PC-9 (cell line): ENCODE measurements at regions of chr12 and their contacts with region 1.

Region 1: GRCh38 chr12:68610370-68611093 is at the start of gene RAP1B:
- DNase-seq: peak; percentile 66 to 89
- H3K4me3 ChIP-seq: peak within 1 kb of the TSS; percentile 97
- H3K27ac ChIP-seq: peak within 1 kb of the TSS; percentile 60
- H3K4me1 ChIP-seq: peaks cover 25% of the 10 kb centered on the region
- H3K27me3 ChIP-seq: no peaks in the 10 kb centered on the region
- CTCF ChIP-seq: no peak
- total RNA-seq, gene RAP1B: 59.0 and 89.7 TPM in 2 replicates

Region 2: DNA sequence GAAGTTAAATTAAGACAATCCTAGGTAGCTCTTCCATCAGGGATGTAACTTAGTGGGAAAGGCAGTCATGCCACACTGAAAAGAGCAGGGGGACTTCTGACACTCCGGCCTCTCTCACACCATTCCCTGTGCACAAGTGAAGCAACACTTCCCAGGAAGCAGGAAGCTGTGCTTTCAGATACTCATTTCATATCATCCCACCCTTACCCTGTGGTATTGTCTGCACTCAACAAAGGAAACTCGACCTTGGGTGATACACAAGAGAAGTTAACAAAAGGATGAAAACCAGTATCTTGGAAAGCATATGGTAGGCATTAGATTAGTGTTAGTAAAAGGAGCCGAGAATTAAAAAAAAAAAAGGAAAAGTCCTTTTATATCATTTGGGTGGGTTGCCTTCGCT is 217.1 kb before region 1 on chr12:
- CTCF ChIA-PET with region 1: no interaction called
- POLR2A ChIA-PET with region 1: interaction called, 24 read pairs
- intact Hi-C with region 1: no loop called
- DNase-seq: no peak
- H3K4me3 ChIP-seq: no peak overlapping the region
- H3K27ac ChIP-seq: no peak overlapping the region
- H3K4me1 ChIP-seq: no peaks in the 10 kb centered on the region
- H3K27me3 ChIP-seq: no peaks in the 10 kb centered on the region
- CTCF ChIP-seq: no peak

Region 3: DNA sequence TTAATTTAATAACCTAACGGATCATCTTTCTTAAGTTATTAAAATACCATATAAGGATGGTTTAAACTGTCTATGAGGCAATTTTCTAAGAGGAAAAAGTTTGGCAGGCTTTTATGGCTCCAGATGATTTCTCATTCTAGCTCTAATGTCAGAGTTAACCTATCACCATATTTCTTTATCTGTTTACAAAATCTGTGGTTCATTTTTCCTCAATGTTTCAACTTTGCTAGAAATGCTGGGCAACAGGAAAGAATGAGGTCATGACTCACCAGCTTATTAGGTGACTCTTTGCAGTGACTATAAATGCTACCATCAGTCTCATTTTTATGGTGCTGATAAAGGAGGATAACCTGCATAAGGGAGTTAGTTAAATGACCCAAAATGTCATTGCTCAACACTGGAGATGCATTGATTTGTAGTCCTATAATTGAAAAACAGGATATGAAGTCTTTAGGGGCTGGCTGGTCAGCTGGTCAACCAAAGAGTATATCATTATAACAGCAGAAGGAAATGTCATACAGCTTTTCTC is 45.1 kb before region 1 on chr12:
- CTCF ChIA-PET with region 1: no interaction called
- POLR2A ChIA-PET with region 1: interaction called, 8 read pairs
- intact Hi-C with region 1: loop called (anchors 1 kb)
- DNase-seq: peak; percentile 32 to 96
- H3K4me3 ChIP-seq: no peak overlapping the region
- H3K27ac ChIP-seq: no peak overlapping the region
- H3K4me1 ChIP-seq: peaks cover 24% of the 10 kb centered on the region
- H3K27me3 ChIP-seq: no peaks in the 10 kb centered on the region
- CTCF ChIP-seq: no peak

Region 4: DNA sequence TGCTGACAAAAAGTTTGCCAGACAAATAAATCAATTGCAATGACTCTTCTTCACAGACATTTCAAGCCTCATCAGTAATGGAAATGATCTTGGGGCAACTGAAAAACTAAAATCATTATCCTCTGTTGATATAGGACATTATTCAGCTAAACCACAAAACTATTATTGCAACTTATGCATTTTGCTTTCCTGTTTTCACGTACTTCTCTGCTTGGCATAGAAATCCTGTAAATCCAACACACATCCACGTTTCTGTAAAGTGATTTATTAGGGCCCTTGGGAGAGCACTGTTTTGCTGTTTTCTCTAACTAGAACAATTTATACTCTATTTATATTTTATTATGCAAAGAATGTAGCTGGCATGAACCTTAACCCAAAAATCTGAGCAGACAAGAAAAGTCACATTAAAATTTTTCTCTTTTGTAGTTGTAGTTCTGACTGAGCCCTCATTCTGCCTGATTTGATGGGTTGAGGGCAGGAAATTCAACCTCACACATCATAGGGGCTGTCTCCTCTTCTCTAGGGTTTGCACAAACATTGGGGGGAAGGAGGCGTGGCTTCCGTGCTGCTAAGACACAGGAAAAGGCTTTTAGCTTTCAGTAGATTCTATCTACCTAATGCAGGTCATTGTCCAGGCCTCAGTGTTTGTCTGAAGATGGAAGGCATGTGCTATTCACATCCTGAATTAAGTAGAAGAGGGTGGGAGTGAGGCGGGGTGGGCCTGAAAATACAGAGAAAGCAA is 64.7 kb after region 1 on chr12:
- CTCF ChIA-PET with region 1: no interaction called
- POLR2A ChIA-PET with region 1: interaction called, 23 read pairs
- intact Hi-C with region 1: no loop called
- DNase-seq: no peak
- H3K4me3 ChIP-seq: no peak overlapping the region
- H3K27ac ChIP-seq: 0 out of 2 replicates have a peak overlapping the region, but pooled peaks have one; percentile 21
- H3K4me1 ChIP-seq: peaks cover 14% of the 10 kb centered on the region
- H3K27me3 ChIP-seq: no peaks in the 10 kb centered on the region
- CTCF ChIP-seq: no peak